Ovary (tissue), 10 donors: ENCODE measurements at regions of chr2 and their contacts with region 1.

Region 1: DNA sequence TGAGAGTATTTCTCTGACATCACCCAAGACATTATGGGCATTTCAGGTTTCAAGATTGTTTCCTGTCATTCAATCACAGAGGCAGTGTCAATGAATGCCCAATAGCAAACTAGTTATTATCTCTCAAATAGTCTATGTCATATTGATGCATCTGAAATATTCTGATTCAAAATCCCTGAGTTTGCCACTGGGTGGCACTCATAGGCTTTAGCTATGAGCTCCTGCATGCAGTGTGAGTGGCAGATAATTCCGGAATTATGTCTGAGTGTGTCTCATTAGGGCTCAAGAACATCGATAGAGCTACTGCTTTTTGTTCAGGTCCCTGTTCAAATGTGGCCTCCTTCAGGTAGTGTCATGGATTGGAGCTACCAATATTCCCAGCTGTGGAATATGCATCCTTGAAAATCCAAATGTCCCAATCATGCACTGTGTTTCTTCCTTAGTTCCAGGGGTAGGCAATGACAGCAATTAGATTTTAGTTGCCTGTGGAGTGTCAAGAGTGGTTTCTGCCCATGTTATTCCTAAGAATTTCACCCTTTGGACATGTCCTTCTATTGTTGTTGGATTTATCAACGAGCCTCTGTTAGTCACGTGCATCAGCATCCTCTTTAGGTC is 7.8 kb upstream of the OR6B3 start:
- DNase-seq: peak in 1 of 5 donors; percentile 27
- H3K4me3 ChIP-seq: no peak overlapping the region
- H3K27ac ChIP-seq: no peak overlapping the region
- H3K4me1 ChIP-seq: no peaks in the 10 kb centered on the region
- H3K27me3 ChIP-seq: no peaks in the 10 kb centered on the region
- CTCF ChIP-seq: peak in 2 of 3 donors; percentile 30 to 31
- EP300 ChIP-seq: no peak
- POLR2A ChIP-seq: no peak

Region 2: GRCh38 chr2:240086563-240086962 is 25.5 kb after region 1 on chr2:
- intact Hi-C with region 1: loop called in 1 of 4 experiments (anchors 2 kb)
- DNase-seq: no peak
- H3K4me3 ChIP-seq: no peak overlapping the region
- H3K27ac ChIP-seq: no peak overlapping the region
- H3K4me1 ChIP-seq: no peaks in the 10 kb centered on the region
- H3K27me3 ChIP-seq: no peaks in the 10 kb centered on the region
- CTCF ChIP-seq: no peak
- EP300 ChIP-seq: no peak
- POLR2A ChIP-seq: no peak